Posterior cingulate gyrus (tissue), 11 donors: ENCODE measurements at regions of chr12 and their contacts with region 1.

Region 1: DNA sequence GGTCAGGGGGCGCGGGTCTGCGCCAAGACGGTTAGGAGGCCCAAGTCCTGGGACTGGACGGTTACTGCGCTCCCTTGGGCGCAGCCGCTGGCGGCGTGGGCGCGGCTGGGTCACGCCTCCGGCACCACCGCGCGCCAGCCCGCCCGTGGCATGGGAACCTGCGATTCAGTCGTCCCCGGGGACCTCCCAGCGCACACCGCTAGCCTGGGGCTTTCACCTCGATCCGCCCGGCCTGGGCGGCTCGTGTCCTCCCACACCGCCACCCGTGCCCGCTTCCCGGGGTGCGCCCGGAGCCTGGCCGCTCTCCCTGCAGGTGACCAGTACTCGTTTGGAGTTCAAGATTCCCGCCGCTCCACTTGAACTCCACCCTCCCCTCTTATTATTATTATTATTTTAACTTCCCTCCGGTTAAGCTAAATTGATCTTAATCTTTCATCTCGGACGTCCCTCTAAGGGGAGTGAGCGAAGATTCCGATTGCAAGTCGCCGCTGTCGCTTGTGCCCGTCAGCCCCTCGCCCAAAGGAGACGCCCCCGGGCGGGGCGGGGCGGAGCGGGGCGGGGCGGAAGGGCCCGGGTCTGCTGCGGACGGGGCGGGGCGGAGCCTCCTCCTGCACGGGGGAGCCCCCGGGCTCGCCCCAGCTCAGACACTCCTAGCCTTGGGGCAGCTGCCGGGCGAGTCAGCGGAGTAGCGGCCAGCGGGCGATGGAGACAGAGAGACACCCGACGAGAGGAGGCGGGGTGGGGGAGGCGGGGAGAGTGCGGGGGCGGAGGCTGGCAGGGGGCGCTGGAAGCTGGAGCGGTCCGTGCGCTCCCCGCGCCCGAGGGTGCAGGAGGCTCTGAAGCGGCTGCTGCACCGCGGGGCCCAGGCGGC is at the start of gene KCNMB4:
- DNase-seq: peak; percentile 32 to 98 (median 78)

Region 2: GRCh38 chr12:70242695-70243509 is 123.0 kb before region 1 on chr12 and contains the start of gene CNOT2:
- intact Hi-C with region 1: loop called (anchors 5 kb)
- DNase-seq: peak; percentile 84 to 98 (median 88)

Region 3: GRCh38 chr12:70535896-70536374 is 170.1 kb after region 1 on chr12:
- intact Hi-C with region 1: loop called (anchors 2 kb)
- DNase-seq: peak in 7 of 10 donors; percentile 49 to 92 (median 65)